Sigmoid colon (tissue), 7 donors: ENCODE measurements at regions of chr12 and their contacts with region 1.

Region 1: GRCh38 chr12:4857472-4858291 is 52.0 kb upstream of the KCNA1 start:
- DNase-seq: peak; percentile 81
- H3K4me3 ChIP-seq: peak overlapping the region in 3 of 4 donors; percentile 11 to 31 (median 22)
- H3K27ac ChIP-seq: peak overlapping the region in 3 of 4 donors; percentile 1 to 55 (median 41)
- H3K4me1 ChIP-seq: peaks cover 0 to 37% (median 29%) of the 10 kb centered on the region in 4 donors
- H3K27me3 ChIP-seq: no peaks in the 10 kb centered on the region
- CTCF ChIP-seq: peak; percentile 73 to 92 (median 87)
- EP300 ChIP-seq: no peak
- POLR2A ChIP-seq: no peak

Region 2: DNA sequence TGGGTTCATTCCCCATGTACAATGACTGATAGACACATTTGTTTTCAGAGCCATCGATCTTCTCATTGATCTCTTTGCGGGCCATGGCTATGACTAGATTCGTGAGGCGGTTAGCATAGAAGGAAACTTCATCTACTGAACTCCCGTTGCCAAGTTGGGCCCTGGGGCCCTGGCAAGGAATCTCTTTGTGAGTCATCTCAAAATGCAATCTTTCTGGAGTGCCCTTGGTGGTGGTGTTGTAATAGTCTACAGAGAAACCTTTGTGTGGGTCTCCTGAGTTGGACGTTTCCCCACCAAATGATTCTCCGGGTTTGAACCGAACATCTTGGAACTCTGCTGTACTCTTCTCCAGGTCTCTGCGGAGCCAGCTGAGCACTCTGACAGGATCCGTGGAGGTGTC is 229.3 kb before region 1 on chr12:
- intact Hi-C with region 1: no loop called
- DNase-seq: no peak
- H3K4me3 ChIP-seq: no peak overlapping the region
- H3K27ac ChIP-seq: no peak overlapping the region
- H3K4me1 ChIP-seq: no peaks in the 10 kb centered on the region
- H3K27me3 ChIP-seq: peaks cover 0 to 4% (median 0%) of the 10 kb centered on the region in 3 donors
- CTCF ChIP-seq: no peak
- EP300 ChIP-seq: no peak
- POLR2A ChIP-seq: no peak

Region 3: DNA sequence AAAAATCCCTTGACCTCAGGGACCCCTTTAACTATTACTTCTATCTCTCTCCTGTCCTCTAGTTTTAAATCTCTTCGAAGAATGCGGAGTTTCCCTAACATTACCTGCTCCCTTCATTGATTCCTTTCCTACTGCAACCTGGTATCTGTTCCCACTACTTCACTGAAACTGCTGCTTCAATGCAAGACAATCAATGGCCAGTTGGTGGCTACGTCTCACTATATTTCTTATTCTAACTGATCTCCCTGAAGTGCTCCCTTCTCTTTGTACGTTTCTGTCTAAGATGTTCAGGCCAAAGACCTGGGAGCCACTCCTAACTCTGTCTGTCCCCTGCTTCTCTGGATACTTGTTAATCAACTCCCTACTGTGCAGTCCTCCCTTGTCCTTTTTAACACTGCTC is 41.7 kb after region 1 on chr12:
- intact Hi-C with region 1: loop called (anchors 2 kb)
- DNase-seq: no peak
- H3K4me3 ChIP-seq: no peak overlapping the region
- H3K27ac ChIP-seq: no peak overlapping the region
- H3K4me1 ChIP-seq: no peaks in the 10 kb centered on the region
- H3K27me3 ChIP-seq: no peaks in the 10 kb centered on the region
- CTCF ChIP-seq: no peak
- EP300 ChIP-seq: no peak
- POLR2A ChIP-seq: no peak

Region 4: GRCh38 chr12:4908684-4909409 is 51.2 kb after region 1 on chr12:
- intact Hi-C with region 1: loop called (anchors 2 kb)
- DNase-seq: peak; percentile 60
- H3K4me3 ChIP-seq: peak overlapping the region in 3 of 4 donors; percentile 40 to 62 (median 55)
- H3K27ac ChIP-seq: peak overlapping the region in 2 of 4 donors; percentile 52 to 59
- H3K4me1 ChIP-seq: peaks cover 0 to 32% (median 29%) of the 10 kb centered on the region in 4 donors
- H3K27me3 ChIP-seq: peaks cover 10 to 48% (median 26%) of the 10 kb centered on the region in 3 donors
- CTCF ChIP-seq: no peak
- EP300 ChIP-seq: no peak
- POLR2A ChIP-seq: no peak

Region 5: DNA sequence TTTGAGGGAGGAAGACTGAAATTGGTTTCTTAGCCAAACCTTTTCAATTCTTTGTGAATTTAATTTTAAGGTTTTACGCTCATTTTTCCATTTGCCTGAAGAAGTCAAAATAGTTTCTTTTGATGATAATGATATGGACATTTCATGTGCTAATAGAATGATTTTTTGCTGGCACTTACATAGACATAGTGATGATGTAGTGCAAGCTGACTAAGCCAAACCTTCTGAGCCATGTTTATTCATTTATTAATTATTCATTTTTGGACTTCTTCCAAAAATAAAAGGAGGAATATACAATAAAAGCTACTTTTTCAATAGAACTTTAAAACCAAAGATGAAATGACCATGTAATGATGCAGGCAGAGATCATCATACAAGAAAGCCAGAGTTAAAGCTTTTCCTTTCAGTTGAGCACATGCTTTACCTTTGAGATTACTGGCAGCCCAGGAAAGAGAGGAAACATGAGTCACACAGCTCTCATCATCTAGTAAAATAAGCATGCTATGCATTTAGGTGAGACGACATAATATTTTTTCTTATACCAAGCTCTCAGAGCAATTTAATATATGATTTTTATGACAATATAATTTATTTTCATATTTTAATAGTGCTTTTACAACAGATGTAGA is 76.8 kb after region 1 on chr12:
- intact Hi-C with region 1: no loop called
- DNase-seq: no peak
- H3K4me3 ChIP-seq: no peak overlapping the region
- H3K27ac ChIP-seq: no peak overlapping the region
- H3K4me1 ChIP-seq: peaks cover 0 to 7% (median 0%) of the 10 kb centered on the region in 4 donors
- H3K27me3 ChIP-seq: peaks cover 0 to 3% (median 0%) of the 10 kb centered on the region in 3 donors
- CTCF ChIP-seq: no peak
- EP300 ChIP-seq: no peak
- POLR2A ChIP-seq: no peak

Region 6: DNA sequence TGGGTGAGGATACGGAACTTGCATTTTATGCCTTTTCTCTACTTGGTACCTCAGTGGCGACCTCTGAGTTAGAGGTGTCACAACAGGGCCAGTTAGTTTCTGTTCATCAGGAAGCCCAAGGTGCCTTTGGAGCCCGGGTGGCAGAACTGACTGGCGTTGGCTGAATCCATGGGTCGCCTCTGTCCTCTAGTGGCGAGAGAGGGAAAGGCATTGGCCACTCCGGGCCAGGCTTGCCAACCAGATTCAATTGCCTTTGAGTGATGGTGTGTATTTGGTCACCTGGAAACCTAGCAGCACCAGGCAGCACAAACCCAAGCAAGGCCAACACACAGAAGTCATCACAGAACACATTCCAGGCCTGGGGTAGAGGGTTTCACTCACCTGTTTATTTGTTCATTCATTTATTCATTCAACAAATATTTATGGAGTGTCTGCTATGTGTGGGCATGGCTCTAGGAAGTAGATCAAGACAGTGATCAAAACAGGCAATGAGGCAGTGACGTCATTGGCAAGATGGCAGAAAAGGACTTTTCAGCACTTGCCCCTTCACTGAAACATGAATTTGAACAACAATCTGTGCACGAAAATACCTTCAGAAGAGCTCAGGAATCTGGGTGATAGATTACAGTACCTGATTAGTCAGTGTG is 145.5 kb after region 1 on chr12:
- intact Hi-C with region 1: loop called (anchors 1 kb)
- DNase-seq: peak; percentile 82
- H3K4me3 ChIP-seq: no peak overlapping the region
- H3K27ac ChIP-seq: no peak overlapping the region
- H3K4me1 ChIP-seq: peaks cover 0 to 11% (median 4%) of the 10 kb centered on the region in 4 donors
- H3K27me3 ChIP-seq: no peaks in the 10 kb centered on the region
- CTCF ChIP-seq: peak; percentile 85 to 99 (median 92)
- EP300 ChIP-seq: no peak
- POLR2A ChIP-seq: no peak

Region 7: DNA sequence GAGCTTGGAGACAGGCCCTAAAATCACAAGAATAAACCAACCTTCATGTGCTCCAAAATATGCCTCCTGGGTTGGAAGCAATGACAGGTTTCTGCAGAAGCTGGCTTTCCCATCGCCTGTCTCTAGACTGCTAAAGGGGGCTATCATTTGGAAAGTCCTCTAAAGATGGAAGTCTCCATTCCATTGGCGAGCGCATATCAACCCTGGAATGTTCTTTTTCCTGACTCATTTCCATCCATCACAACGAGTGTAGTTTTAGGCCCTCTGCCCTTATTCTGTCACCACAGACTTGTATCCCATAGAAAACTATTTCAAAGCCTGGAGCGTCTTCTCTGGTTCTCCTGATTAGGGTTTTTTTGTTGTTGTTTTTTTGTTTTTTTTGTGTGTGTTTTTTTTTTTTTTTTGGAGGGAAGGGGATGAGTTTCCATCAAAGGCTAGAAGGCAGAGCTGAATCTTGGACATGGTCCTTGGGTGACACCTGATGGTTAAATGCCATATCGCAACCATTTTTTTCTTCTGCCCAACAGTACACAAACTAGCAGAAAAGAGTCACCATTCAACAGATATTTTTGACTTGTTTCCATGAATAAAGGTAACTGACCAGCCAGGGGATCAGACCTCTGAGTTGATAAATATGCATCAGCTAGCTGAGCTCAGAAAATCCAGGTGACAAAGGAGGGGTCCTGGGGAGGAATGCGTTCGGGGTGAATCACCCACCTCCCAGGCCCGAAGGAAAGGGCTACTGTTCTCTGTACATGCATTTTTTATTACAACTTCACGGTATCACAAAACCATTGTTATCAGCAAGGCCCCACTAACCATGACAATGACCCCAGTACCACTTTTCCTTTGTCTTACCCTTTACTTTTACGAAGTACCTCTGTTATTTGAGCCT is 226.5 kb after region 1 on chr12:
- intact Hi-C with region 1: loop called (anchors 5 kb)
- DNase-seq: no peak
- H3K4me3 ChIP-seq: no peak overlapping the region
- H3K27ac ChIP-seq: no peak overlapping the region
- H3K4me1 ChIP-seq: no peaks in the 10 kb centered on the region
- H3K27me3 ChIP-seq: no peaks in the 10 kb centered on the region
- CTCF ChIP-seq: peak; percentile 45 to 60 (median 55)
- EP300 ChIP-seq: no peak
- POLR2A ChIP-seq: no peak